Breast epithelium (tissue), 4 donors: ENCODE measurements at regions of chr6 and their contacts with region 1.

Region 1: GRCh38 chr6:1396952-1397868 is 7.8 kb downstream of the FOXF2 start:
- DNase-seq: peak in 1 of 2 donors; percentile 54
- H3K4me3 ChIP-seq: no peak overlapping the region
- H3K27ac ChIP-seq: no peak overlapping the region
- H3K4me1 ChIP-seq: no peaks in the 10 kb centered on the region
- H3K27me3 ChIP-seq: peaks cover 0 to 59% of the 10 kb centered on the region in 2 donors
- CTCF ChIP-seq: peak; percentile 65 to 76 (median 74)
- POLR2A ChIP-seq: no peak

Region 2: DNA sequence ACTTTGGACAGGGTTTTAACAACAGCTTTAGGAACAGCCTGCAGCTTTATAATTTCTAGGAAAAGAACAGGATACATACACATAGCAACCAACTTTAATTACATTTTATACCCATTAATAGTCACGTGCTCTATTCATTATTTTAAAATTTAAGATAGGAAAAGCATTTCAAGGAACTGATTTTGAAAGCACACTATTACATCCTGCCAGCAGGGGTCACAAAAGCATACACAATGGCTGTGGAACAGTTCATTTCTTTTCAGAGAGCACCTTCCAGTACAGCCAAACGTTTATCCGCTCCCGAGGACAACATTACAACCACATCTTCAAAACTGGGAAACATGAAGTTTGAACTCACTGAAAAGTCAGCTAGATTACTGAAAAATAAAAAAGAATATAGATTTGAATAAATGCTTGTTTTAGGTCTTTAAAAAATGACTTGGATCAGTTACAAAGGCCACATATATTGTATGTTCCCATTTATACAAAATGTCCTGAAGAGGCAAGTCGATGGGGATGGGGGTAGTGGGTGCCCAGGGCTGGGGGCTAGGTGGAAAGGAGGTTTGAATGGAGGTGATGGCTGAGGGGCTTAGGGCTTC is 599.6 kb before region 1 on chr6:
- intact Hi-C with region 1: loop called (anchors 5 kb)
- DNase-seq: peak in 1 of 2 donors; percentile 35
- H3K4me3 ChIP-seq: no peak overlapping the region
- H3K27ac ChIP-seq: no peak overlapping the region
- H3K4me1 ChIP-seq: no peaks in the 10 kb centered on the region
- H3K27me3 ChIP-seq: peaks cover 0 to 26% of the 10 kb centered on the region in 2 donors
- CTCF ChIP-seq: peak; percentile 76 to 85 (median 77)
- POLR2A ChIP-seq: no peak